Calu3 (cell line): ENCODE measurements at regions of chr9 and their contacts with region 1.

Region 1: DNA sequence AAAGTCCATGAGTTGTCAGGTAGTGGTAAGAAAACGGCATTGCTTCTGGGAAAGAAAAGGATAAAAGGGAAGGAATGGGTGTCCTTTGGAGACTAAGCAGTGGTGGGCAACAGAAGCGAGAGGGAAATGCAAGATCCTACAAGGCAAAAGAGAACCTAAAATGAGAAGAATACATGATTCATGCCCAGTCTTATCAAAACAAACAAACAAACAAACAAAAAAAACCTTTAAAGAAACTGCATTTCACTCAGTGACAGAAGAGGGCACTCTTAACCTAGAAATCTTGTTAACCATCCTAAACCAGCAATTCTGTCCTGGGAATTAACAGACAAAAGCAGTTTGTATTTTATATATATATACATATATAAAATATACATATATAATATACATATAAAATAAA is 88.5 kb downstream of the SUSD1 start:
- DNase-seq: no peak
- H3K4me3 Mint-ChIP-seq: no peak overlapping the region
- H3K27ac Mint-ChIP-seq: no peak overlapping the region
- H3K4me1 Mint-ChIP-seq: peaks cover 9% of the 10 kb centered on the region
- H3K27me3 Mint-ChIP-seq: no peaks in the 10 kb centered on the region
- CTCF ChIP-seq: no peak

Region 2: GRCh38 chr9:112705768-112706427 is 619.3 kb after region 1 on chr9:
- CTCF ChIA-PET with region 1: no interaction called
- intact Hi-C with region 1: loop called (anchors 10 kb)
- DNase-seq: no peak
- H3K4me3 Mint-ChIP-seq: no peak overlapping the region
- H3K27ac Mint-ChIP-seq: no peak overlapping the region
- H3K4me1 Mint-ChIP-seq: no peaks in the 10 kb centered on the region
- H3K27me3 Mint-ChIP-seq: no peaks in the 10 kb centered on the region
- CTCF ChIP-seq: no peak